Prostate gland (tissue), 2 donors: ENCODE measurements at regions of chr18 and their contacts with region 1.

Region 1: GRCh38 chr18:11818486-11819203 is 32.6 kb upstream of the CHMP1B start:
- DNase-seq: no peak
- H3K4me3 ChIP-seq: no peak overlapping the region
- H3K27ac ChIP-seq: no peak overlapping the region
- H3K4me1 ChIP-seq: no peaks in the 10 kb centered on the region
- H3K27me3 ChIP-seq: no peaks in the 10 kb centered on the region
- CTCF ChIP-seq: no peak
- POLR2A ChIP-seq: no peak

Region 2: GRCh38 chr18:11654736-11655605 is 163.7 kb before region 1 on chr18:
- intact Hi-C with region 1: loop called (anchors 10 kb)
- DNase-seq: peak; percentile 58
- H3K4me3 ChIP-seq: no peak overlapping the region
- H3K27ac ChIP-seq: no peak overlapping the region
- H3K4me1 ChIP-seq: no peaks in the 10 kb centered on the region
- H3K27me3 ChIP-seq: peaks cover 6% of the 10 kb centered on the region
- CTCF ChIP-seq: peak; percentile 63 to 86 (median 76)
- POLR2A ChIP-seq: no peak

Region 3: DNA sequence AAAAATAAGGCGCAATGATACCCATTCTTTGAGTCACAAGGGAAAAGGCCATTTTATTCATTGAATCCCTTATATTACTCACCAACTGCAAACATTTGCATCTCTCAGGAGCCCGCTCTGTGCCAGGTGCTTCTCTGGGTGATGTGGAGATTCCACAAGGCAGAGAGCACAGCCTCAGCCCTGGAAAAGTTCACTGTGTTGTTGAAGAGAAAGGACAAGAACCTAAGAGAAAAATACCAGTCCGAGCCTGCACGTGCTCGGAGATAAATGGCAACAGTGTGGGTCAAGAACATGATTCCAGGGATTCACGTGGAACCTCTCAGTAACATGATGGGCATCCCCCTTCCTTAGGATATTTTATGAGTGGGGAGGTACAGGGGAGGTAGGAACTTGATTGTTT is 117.8 kb before region 1 on chr18:
- intact Hi-C with region 1: no loop called
- DNase-seq: no peak
- H3K4me3 ChIP-seq: no peak overlapping the region
- H3K27ac ChIP-seq: no peak overlapping the region
- H3K4me1 ChIP-seq: no peaks in the 10 kb centered on the region
- H3K27me3 ChIP-seq: no peaks in the 10 kb centered on the region
- CTCF ChIP-seq: no peak
- POLR2A ChIP-seq: no peak